ENCODE measurements at regions of chr4 and their contacts with region 1.

Region 1: GRCh38 chr4:153362184-153362583 is 17.7 kb downstream of the MND1 start:
- DNase-seq: no peak
- ATAC-seq: no peak
- H3K4me3 ChIP-seq: no peak overlapping the region
- H3K27ac ChIP-seq: no peak overlapping the region
- H3K4me1 ChIP-seq: no peaks in the 10 kb centered on the region
- H3K27me3 ChIP-seq: no peaks in the 10 kb centered on the region
- CTCF ChIP-seq: no peak
- POLR2A ChIP-seq: no peak

Region 2: GRCh38 chr4:153426207-153426885 is 64.2 kb after region 1 on chr4:
- intact Hi-C with region 1: loop called in 2 of 10 experiments (anchors 5 to 10 kb)
- DNase-seq: no peak
- ATAC-seq: no peak
- H3K4me3 ChIP-seq: no peak overlapping the region
- H3K27ac ChIP-seq: peak overlapping the region in 1 of 12 donors; percentile 18
- H3K4me1 ChIP-seq: peaks cover 0 to 12% (median 0%) of the 10 kb centered on the region in 12 donors
- H3K27me3 ChIP-seq: no peaks in the 10 kb centered on the region
- CTCF ChIP-seq: no peak
- POLR2A ChIP-seq: no peak